Activated B cell treated with CpG ODN at 0.5 μM for 24 hours (primary cell): ENCODE measurements at regions of chr5 and their contacts with region 1.

Region 1: DNA sequence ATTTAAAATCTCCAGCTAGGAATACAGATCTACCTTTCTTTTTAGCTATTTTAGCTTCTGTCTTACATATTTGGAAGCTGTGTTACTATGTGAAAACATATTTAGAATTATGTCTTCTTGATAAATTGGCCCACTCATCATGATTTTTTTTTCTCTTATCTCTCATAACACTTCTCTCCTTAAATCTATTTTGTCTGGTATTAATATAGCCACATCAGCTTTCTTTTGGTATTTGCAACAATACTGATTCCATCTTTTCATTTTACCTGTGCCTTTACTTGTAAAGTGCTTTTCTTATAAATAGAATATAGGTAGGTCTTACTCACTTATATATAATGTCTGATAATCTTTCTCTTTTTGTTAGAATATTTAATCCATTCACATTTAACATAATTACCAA is 19.6 kb downstream of the PJA2 start:
- DNase-seq: no peak
- ATAC-seq: no peak
- H3K4me3 Mint-ChIP-seq: no peak overlapping the region
- H3K27ac Mint-ChIP-seq: no peak overlapping the region
- H3K4me1 Mint-ChIP-seq: peaks cover 80% of the 10 kb centered on the region
- H3K27me3 Mint-ChIP-seq: no peaks in the 10 kb centered on the region
- CTCF ChIP-seq: no peak

Region 2: GRCh38 chr5:109374625-109375024 is 15.6 kb before region 1 on chr5:
- CTCF ChIA-PET with region 1: no interaction called
- POLR2A ChIA-PET with region 1: no interaction called
- intact Hi-C with region 1: loop called (anchors 2 kb)
- DNase-seq: no peak
- ATAC-seq: no peak
- H3K4me3 Mint-ChIP-seq: no peak overlapping the region
- H3K27ac Mint-ChIP-seq: no peak overlapping the region
- H3K4me1 Mint-ChIP-seq: peaks cover 14% of the 10 kb centered on the region
- H3K27me3 Mint-ChIP-seq: no peaks in the 10 kb centered on the region
- CTCF ChIP-seq: no peak

Region 3: GRCh38 chr5:109468737-109469420 is 78.7 kb after region 1 on chr5:
- CTCF ChIA-PET with region 1: no interaction called
- POLR2A ChIA-PET with region 1: no interaction called
- intact Hi-C with region 1: no loop called
- DNase-seq: peak; percentile 55
- ATAC-seq: peak; percentile 93
- H3K4me3 Mint-ChIP-seq: no peak overlapping the region
- H3K27ac Mint-ChIP-seq: no peak overlapping the region
- H3K4me1 Mint-ChIP-seq: peaks cover 6% of the 10 kb centered on the region
- H3K27me3 Mint-ChIP-seq: no peaks in the 10 kb centered on the region
- CTCF ChIP-seq: no peak